Prostate gland (tissue), 2 donors: ENCODE measurements at regions of chr14 and their contacts with region 1.

Region 1: GRCh38 chr14:63276492-63277342 is 42.0 kb downstream of the GPHB5 start:
- DNase-seq: peak; percentile 7
- H3K4me3 ChIP-seq: no peak overlapping the region
- H3K27ac ChIP-seq: no peak overlapping the region
- H3K4me1 ChIP-seq: no peaks in the 10 kb centered on the region
- H3K27me3 ChIP-seq: no peaks in the 10 kb centered on the region
- CTCF ChIP-seq: peak; percentile 56 to 89 (median 80)
- POLR2A ChIP-seq: no peak

Region 2: DNA sequence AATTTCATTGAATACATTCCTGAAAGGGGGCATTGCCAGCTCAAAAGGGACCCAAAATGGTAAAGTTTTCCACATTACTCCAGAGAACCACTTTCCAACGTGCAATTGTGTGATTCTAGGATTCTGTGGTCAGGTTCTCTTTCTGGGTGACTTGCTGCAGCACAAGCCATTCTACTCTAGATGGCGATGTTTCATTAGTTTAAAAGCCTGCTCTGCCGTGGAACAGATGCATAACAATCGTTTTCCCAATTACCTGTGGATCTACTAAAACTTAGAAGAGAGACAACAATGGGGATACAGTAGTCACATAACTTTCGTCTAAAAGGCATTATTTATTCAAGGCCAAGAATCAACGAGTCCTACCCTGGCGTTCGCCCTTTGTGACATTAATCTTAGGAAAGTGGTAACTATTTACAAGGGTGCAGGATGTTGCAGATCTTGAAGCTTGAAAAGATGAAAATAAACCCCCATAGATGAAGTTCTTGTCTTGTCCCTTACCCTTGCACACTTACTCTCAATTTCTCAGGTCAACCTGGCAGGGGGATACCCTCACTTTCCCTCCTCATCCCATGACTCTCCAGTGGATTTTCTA is 1113.6 kb before region 1 on chr14:
- intact Hi-C with region 1: loop called (anchors 5 kb)
- DNase-seq: peak; percentile 5
- H3K4me3 ChIP-seq: no peak overlapping the region
- H3K27ac ChIP-seq: no peak overlapping the region
- H3K4me1 ChIP-seq: no peaks in the 10 kb centered on the region
- H3K27me3 ChIP-seq: no peaks in the 10 kb centered on the region
- CTCF ChIP-seq: peak; percentile 17 to 63 (median 40)
- POLR2A ChIP-seq: no peak

Region 3: GRCh38 chr14:62179367-62180018 is 1097.2 kb before region 1 on chr14:
- intact Hi-C with region 1: loop called (anchors 5 kb)
- DNase-seq: peak; percentile 73
- H3K4me3 ChIP-seq: no peak overlapping the region
- H3K27ac ChIP-seq: no peak overlapping the region
- H3K4me1 ChIP-seq: no peaks in the 10 kb centered on the region
- H3K27me3 ChIP-seq: no peaks in the 10 kb centered on the region
- CTCF ChIP-seq: peak in 3 of 4 experiments; percentile 58 to 73 (median 63)
- POLR2A ChIP-seq: no peak

Region 4: GRCh38 chr14:63174760-63175211 is 101.9 kb before region 1 on chr14:
- intact Hi-C with region 1: loop called (anchors 2 kb)
- DNase-seq: peak; percentile 26
- H3K4me3 ChIP-seq: no peak overlapping the region
- H3K27ac ChIP-seq: no peak overlapping the region
- H3K4me1 ChIP-seq: no peaks in the 10 kb centered on the region
- H3K27me3 ChIP-seq: no peaks in the 10 kb centered on the region
- CTCF ChIP-seq: peak; percentile 10 to 64 (median 60)
- POLR2A ChIP-seq: no peak

Region 5: GRCh38 chr14:63357841-63358240 is 81.1 kb after region 1 on chr14:
- intact Hi-C with region 1: no loop called
- DNase-seq: no peak
- H3K4me3 ChIP-seq: no peak overlapping the region
- H3K27ac ChIP-seq: no peak overlapping the region
- H3K4me1 ChIP-seq: no peaks in the 10 kb centered on the region
- H3K27me3 ChIP-seq: no peaks in the 10 kb centered on the region
- CTCF ChIP-seq: no peak
- POLR2A ChIP-seq: no peak